Activated T-helper 1 cell treated with anti-CD3 and anti-CD28 coated beads, Interleukin-12 subunit alpha, Interleukin-12 subunit beta, Interleukin-2, Interleukin-4 antibody, amounts not matched to agents 30 ng/mL and 10 ng/mL and 1 ng/mL, durations not matched to agents 14 hours and 24 hours and 36 hours (primary cell): ENCODE measurements at regions of chr13 and their contacts with region 1.

Region 1: GRCh38 chr13:99656092-99656745 is 154.9 kb downstream of the TM9SF2 start:
- DNase-seq: peak; percentile 74
- H3K4me3 Mint-ChIP-seq: peak overlapping the region; percentile 57
- H3K27ac Mint-ChIP-seq: peak overlapping the region; percentile 9
- H3K4me1 Mint-ChIP-seq: peaks cover 44% of the 10 kb centered on the region
- H3K27me3 Mint-ChIP-seq: peaks cover 23% of the 10 kb centered on the region

Region 2: DNA sequence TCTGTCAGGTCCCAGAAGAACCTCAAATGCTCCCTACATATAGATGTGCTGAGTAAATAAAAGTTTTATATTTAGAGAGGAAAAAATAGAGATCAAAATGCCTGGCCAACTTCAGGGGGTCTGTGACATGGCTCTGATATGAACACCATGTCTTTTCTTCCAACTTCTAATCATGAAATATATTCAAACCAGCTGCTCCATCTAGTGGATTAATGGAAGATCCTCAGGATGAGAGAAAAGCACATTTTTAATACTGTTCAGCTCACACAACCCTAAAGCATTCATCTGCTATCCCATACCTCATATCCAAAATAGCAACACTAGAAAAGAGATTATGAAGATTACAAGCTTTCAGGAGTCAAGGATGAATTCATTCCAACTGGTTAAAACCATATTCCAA is 622.4 kb before region 1 on chr13:
- intact Hi-C with region 1: no loop called
- DNase-seq: no peak
- H3K4me3 Mint-ChIP-seq: no peak overlapping the region
- H3K27ac Mint-ChIP-seq: no peak overlapping the region
- H3K4me1 Mint-ChIP-seq: peaks cover 23% of the 10 kb centered on the region
- H3K27me3 Mint-ChIP-seq: no peaks in the 10 kb centered on the region

Region 3: GRCh38 chr13:99442273-99442895 is 213.8 kb before region 1 on chr13:
- intact Hi-C with region 1: loop called (anchors 1 kb)
- DNase-seq: peak; percentile 49
- H3K4me3 Mint-ChIP-seq: no peak overlapping the region
- H3K27ac Mint-ChIP-seq: no peak overlapping the region
- H3K4me1 Mint-ChIP-seq: peaks cover 6% of the 10 kb centered on the region
- H3K27me3 Mint-ChIP-seq: peaks cover 34% of the 10 kb centered on the region

Region 4: GRCh38 chr13:99900960-99901359 is 244.7 kb after region 1 on chr13:
- intact Hi-C with region 1: loop called (anchors 1 kb)
- DNase-seq: no peak
- H3K4me3 Mint-ChIP-seq: no peak overlapping the region
- H3K27ac Mint-ChIP-seq: no peak overlapping the region
- H3K4me1 Mint-ChIP-seq: peaks cover 7% of the 10 kb centered on the region
- H3K27me3 Mint-ChIP-seq: peaks cover 50% of the 10 kb centered on the region

Region 5: DNA sequence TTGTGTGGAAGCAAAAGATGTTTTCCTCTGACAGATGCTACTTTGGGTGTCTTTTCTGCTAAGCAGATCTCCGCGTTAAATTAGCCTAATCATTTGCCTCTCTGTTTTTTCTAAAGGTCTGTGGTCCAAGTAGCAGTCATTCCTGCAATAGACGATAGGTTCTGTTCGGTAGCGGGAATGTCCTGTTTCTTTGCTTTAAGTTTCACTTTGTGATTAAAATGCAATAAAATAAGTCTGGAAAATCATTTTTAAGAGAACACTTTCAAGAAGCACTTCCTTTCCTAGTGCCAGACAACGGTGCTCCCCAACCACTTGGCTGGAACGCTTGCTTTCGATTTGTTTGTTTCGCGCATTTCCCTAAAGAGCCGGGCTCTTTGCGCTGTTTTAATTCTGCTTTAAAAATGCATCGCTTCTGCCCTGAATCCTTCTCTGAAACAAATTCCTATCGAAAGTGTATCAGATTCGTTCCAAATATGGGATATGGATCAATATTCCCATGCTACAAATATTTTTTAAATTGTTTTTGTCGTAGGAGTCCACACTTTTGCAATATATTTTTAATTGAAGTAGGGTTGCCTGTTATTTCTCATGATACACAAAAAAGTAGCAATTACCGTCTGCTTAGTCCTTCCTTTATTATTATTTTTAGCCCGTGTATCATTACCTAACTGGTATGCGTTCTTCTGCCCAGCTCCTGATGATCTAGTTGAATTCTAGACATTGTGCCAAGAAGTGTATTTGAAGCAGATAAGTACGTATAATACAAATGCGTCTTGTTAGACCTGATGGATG is 339.6 kb after region 1 on chr13:
- intact Hi-C with region 1: loop called (anchors 2 kb)
- DNase-seq: no peak
- H3K4me3 Mint-ChIP-seq: peak overlapping the region; percentile 45
- H3K27ac Mint-ChIP-seq: peak overlapping the region; percentile 44
- H3K4me1 Mint-ChIP-seq: peaks cover 30% of the 10 kb centered on the region
- H3K27me3 Mint-ChIP-seq: peaks cover 74% of the 10 kb centered on the region

Region 6: DNA sequence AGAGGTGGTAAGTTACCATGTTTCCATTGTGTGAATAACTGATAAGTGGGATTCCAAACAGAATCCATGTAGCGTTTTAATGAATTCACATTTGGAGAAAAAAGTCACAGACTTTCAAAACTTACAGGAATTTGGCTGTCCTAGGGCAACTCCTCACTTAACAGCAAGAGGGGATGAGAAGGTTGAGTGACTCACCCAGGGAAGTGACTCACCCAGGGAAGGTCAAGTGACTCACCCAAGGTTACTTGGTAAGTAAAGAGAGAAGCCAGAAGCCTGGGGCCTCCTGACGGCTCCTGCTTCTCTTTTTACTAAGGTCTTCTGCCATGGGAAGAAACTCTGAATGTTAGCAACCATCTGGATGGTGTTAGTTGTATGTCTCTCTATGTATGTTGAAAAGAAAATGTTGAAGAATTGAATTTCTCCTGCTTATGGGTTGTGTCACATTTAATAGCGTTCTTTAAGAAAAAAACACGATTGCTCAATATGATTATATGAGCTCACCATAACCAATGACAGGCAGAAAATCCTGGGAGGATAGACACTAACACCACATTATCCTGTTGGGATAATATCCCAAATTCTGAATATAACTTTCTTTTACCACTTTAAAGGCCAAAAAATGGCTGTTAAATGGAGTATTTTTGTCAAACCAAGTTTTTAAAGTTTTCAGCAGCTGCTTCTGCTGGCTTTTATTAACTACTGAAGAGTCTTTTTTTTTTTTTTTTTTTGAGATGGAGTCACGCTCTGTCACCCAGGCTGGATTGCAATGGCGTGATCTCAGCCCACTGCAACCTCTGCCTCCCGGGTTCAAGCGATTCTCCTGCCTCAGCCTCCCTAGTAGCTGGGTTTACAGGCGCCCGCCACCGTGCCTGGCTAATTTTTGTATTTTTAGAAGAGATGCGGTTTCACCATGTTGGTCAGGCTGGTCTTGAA is 736.8 kb after region 1 on chr13:
- intact Hi-C with region 1: loop called (anchors 1 kb)
- DNase-seq: peak; percentile 60
- H3K4me3 Mint-ChIP-seq: peak overlapping the region; percentile 53
- H3K27ac Mint-ChIP-seq: peak overlapping the region; percentile 93
- H3K4me1 Mint-ChIP-seq: peaks cover 38% of the 10 kb centered on the region
- H3K27me3 Mint-ChIP-seq: no peaks in the 10 kb centered on the region

Region 7: GRCh38 chr13:100588331-100589177 is 932.3 kb after region 1 on chr13 and contains the start of gene GGACT:
- intact Hi-C with region 1: loop called (anchors 1 kb)
- DNase-seq: peak; percentile 79
- H3K4me3 Mint-ChIP-seq: peak within 1 kb of the TSS; percentile 87
- H3K27ac Mint-ChIP-seq: peak within 1 kb of the TSS; percentile 94
- H3K4me1 Mint-ChIP-seq: peaks cover 57% of the 10 kb centered on the region
- H3K27me3 Mint-ChIP-seq: no peaks in the 10 kb centered on the region
- total RNA-seq, gene GGACT: 4.0 and 7.2 TPM in 2 replicates